IMR-90 (cell line): ENCODE measurements at regions of chr11 and their contacts with region 1.

Region 1: DNA sequence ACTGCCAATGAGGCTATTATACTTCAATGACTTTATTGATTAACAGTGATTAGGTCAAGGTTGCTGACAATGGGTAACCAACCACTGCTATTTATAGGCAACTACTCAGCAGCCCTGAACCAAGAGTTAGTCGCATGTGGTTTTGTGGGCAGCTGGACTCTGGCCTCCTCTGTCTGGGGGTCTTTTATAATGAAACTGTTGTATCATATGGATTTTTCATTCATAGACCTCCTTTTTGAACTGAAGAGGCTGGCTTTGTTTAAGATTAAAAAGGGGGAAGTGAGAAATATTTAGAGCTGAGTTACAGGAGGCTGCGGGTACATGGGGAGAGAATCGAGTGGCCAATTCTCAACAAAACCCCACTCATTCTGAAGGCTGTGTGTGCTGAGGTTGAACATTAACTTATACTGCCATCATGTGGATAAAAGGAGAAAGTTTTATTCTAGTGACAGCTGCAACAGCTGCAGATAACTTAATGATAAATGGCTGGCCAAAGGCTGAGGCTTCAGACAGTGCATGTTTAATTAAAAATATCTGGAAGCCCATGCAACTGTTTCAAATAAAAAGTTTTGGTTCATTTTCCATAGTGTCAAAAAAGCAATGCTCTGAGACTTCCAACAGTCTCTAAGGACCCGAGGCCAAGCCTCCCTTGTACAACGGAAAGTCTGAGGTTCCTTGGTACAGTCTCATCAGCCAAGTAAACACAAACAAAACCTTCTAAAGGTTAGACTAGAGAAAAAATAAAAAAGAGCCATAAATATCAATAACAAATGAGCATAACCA is 682.6 kb downstream of the KCNA4 start:
- DNase-seq: peak; percentile 88
- ATAC-seq: peak; percentile 67
- H3K4me3 ChIP-seq: no peak overlapping the region
- H3K27ac ChIP-seq: peak overlapping the region; percentile 93
- H3K4me1 ChIP-seq: peaks cover 14% of the 10 kb centered on the region
- H3K27me3 ChIP-seq: no peaks in the 10 kb centered on the region
- CTCF ChIP-seq: peak; percentile 76
- POLR2A ChIP-seq: no peak
- RAD21 ChIP-seq: peak; percentile 91

Region 2: DNA sequence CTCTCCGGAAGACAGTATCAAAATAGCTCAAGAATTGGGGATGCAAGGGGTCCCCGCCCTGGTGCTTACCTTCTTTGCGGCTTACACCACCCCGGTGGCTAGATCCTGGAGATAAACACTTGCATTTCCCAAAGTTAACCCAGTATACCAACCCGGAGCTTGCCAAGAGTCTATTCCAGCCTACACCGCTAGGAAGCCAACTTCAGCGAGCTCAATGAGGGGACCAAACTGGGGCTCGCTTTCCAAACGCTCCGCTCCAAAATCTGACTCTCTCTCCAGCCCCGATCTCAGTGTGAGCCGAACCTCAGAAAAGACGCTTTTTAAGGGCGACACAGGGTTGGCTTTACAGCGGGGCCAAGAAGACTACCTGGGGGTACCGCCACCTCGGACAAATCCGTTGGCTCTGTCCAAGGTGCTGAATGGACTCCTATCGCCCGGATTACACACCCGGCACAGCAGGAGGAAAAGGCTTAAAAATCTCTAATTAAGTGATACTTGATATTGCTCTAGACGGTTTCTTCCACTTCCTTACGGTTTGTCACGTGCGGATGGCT is 1613.8 kb before region 1 on chr11:
- CTCF ChIA-PET with region 1: interaction called, 3 read pairs
- POLR2A ChIA-PET with region 1: no interaction called
- dilution Hi-C with region 1: no loop called
- in situ Hi-C with region 1: no loop called
- intact Hi-C with region 1: loop called (anchors 5 kb)
- DNase-seq: peak; percentile 68
- ATAC-seq: no peak
- H3K4me3 ChIP-seq: peak overlapping the region; percentile 0; the same call in 1 of the 2 replicates
- H3K27ac ChIP-seq: no peak overlapping the region
- H3K4me1 ChIP-seq: peaks cover 6% of the 10 kb centered on the region
- H3K27me3 ChIP-seq: no peaks in the 10 kb centered on the region
- CTCF ChIP-seq: 0 out of 2 replicates have a peak, but pooled peaks have one; percentile 18
- POLR2A ChIP-seq: no peak
- RAD21 ChIP-seq: no peak

Region 3: GRCh38 chr11:28107748-28108618 is 1226.2 kb before region 1 on chr11 and contains the starts of genes KIF18A and METTL15:
- CTCF ChIA-PET with region 1: no interaction called
- POLR2A ChIA-PET with region 1: no interaction called
- dilution Hi-C with region 1: no loop called
- in situ Hi-C with region 1: loop called (anchors 10 kb)
- intact Hi-C with region 1: loop called (anchors 2 kb)
- DNase-seq: peak; percentile 99
- ATAC-seq: peak; percentile 89
- H3K4me3 ChIP-seq: peak within 1 kb of the TSS; percentile 67
- H3K27ac ChIP-seq: peak within 1 kb of the TSS; percentile 69
- H3K4me1 ChIP-seq: no peaks in the 10 kb centered on the region
- H3K27me3 ChIP-seq: no peaks in the 10 kb centered on the region
- CTCF ChIP-seq: no peak
- POLR2A ChIP-seq: peak; percentile 96
- RAD21 ChIP-seq: peak; percentile 26
- total RNA-seq, gene KIF18A: 24.4 and 37.2 TPM in 2 replicates
- total RNA-seq, gene METTL15: 24.4 and 30.5 TPM in 2 replicates

Region 4: GRCh38 chr11:28343276-28344233 is 990.6 kb before region 1 on chr11:
- CTCF ChIA-PET with region 1: no interaction called
- POLR2A ChIA-PET with region 1: no interaction called
- dilution Hi-C with region 1: no loop called
- in situ Hi-C with region 1: no loop called
- intact Hi-C with region 1: loop called (anchors 10 kb)
- DNase-seq: peak; percentile 95
- ATAC-seq: peak; percentile 90
- H3K4me3 ChIP-seq: no peak overlapping the region
- H3K27ac ChIP-seq: peak overlapping the region; percentile 9; the same call in 1 of the 2 replicates
- H3K4me1 ChIP-seq: no peaks in the 10 kb centered on the region
- H3K27me3 ChIP-seq: no peaks in the 10 kb centered on the region
- CTCF ChIP-seq: no peak
- POLR2A ChIP-seq: no peak
- RAD21 ChIP-seq: no peak

Region 5: DNA sequence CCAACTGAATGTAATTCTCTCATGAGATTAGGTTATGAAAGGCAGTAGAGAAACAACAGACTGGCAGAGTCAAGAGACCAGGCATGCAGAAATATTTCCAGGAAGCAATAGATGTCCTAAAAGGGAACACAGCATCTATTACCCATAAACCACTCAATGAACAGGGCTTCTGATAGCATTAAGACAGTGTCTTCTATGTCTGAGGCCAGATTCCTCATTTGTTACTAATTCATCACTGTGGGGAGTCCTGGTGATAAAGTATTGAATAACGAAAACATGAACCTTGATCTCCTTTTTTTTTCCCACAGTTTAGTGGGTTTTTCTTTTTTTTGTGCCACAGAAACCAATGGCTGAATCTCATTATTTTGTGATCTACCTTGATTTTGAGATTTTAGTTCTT is 887.0 kb before region 1 on chr11:
- CTCF ChIA-PET with region 1: no interaction called
- POLR2A ChIA-PET with region 1: no interaction called
- dilution Hi-C with region 1: no loop called
- in situ Hi-C with region 1: no loop called
- intact Hi-C with region 1: no loop called
- DNase-seq: peak; percentile 61
- ATAC-seq: peak; percentile 62; the same call in 1 of the 2 replicates
- H3K4me3 ChIP-seq: no peak overlapping the region
- H3K27ac ChIP-seq: no peak overlapping the region
- H3K4me1 ChIP-seq: peaks cover 3% of the 10 kb centered on the region
- H3K27me3 ChIP-seq: no peaks in the 10 kb centered on the region
- CTCF ChIP-seq: no peak
- POLR2A ChIP-seq: no peak
- RAD21 ChIP-seq: no peak

Region 6: GRCh38 chr11:28529540-28530410 is 804.4 kb before region 1 on chr11:
- CTCF ChIA-PET with region 1: no interaction called
- POLR2A ChIA-PET with region 1: no interaction called
- dilution Hi-C with region 1: no loop called
- in situ Hi-C with region 1: no loop called
- intact Hi-C with region 1: loop called (anchors 1 kb)
- DNase-seq: peak; percentile 82
- ATAC-seq: peak; percentile 64
- H3K4me3 ChIP-seq: no peak overlapping the region
- H3K27ac ChIP-seq: peak overlapping the region; percentile 19; the same call in 1 of the 2 replicates
- H3K4me1 ChIP-seq: peaks cover 3% of the 10 kb centered on the region; the same call in 1 of the 2 replicates
- H3K27me3 ChIP-seq: no peaks in the 10 kb centered on the region
- CTCF ChIP-seq: peak; percentile 57
- POLR2A ChIP-seq: no peak
- RAD21 ChIP-seq: peak; percentile 59

Region 7: DNA sequence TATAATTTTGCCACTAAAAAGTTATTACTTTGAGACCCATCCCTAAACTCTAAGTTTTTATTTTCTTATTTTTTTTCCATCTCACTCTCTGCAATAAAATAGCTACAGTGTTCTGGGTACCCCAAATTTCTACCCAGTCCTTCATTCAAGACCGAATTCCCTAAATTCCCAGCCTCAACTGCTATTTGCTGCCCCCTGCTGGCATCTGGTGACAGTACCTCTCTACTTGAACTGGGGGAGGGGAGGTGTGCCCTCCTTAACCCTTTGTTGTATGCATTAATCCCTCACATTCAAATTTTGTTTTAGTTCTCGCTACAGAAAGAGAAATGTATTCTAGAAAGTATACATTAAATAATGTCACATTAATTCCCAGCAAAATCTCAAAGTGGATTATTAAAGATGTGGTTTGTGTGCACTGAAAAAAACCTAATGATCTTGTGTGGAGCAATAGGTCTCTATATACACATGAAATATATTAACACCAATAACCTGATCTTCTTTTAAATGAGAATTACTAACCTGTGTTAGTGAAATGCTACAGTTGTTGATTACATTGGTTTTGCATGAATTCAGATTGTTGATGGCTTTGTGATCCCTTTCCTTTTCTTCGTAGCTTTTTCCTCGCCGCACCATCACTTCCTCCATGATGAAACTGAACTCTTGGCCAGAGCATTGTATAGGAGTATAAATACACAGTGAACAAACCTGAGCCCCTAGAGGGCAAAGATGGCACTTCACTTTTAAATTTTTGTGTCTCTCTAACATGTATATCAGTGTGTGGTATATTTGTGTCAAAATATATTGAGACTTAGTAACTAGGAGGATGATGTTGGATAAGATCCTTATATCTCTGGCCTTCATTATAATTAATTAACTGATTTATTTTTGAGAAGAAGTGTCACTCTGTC is 636.0 kb before region 1 on chr11:
- CTCF ChIA-PET with region 1: no interaction called
- POLR2A ChIA-PET with region 1: no interaction called
- dilution Hi-C with region 1: no loop called
- in situ Hi-C with region 1: no loop called
- intact Hi-C with region 1: loop called (anchors 5 kb)
- DNase-seq: peak; percentile 61
- ATAC-seq: peak; percentile 64
- H3K4me3 ChIP-seq: no peak overlapping the region
- H3K27ac ChIP-seq: peak overlapping the region; percentile 11; the same call in 1 of the 2 replicates
- H3K4me1 ChIP-seq: peaks cover 14% of the 10 kb centered on the region
- H3K27me3 ChIP-seq: no peaks in the 10 kb centered on the region
- CTCF ChIP-seq: peak; percentile 78
- POLR2A ChIP-seq: no peak
- RAD21 ChIP-seq: peak; percentile 81